Posterior vena cava (tissue), 2 donors: ENCODE measurements at regions of chr11 and their contacts with region 1.

Region 1: DNA sequence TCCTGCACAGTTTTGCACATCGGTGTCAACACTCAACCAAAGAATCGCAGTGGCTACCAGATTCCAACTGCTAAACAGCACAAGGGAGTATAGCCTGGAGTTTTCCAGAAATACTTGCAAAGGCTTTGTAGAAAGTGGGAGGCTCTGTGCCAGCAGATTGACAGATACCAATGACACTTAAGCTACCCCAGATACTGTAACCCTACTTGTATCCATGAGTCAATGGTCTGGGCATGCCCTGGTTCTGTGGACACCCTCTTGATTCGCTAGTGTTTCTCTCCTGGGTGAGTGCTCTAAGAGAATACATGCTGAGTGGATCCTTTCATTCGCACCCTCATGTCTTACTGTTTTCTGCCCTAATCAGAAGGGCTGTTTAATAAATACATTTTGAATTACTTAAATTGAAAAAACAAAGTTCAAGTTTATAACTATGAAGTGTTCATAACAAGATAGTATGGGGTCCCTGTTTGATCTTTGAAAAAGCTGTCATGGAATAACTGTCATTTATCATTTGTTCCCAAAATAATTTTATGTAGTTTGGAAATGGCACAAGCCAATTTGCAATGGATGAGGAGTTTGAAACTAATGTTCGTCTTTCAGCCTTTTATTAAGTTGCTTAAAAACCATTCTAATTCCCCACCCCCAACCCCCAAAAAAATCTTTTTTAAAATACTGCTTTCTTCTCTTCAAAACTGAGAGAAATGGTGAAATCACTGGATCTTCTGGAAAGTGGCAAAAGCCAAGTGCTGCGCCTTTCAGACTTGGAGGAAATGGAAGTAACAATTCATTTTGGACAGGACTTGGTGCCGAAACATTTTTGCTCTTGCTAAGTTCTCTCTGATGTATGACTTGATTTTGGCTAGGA is 600.5 kb upstream of the TENM4 start:
- DNase-seq: no peak

Region 2: GRCh38 chr11:81397316-81397715 is 1355.9 kb after region 1 on chr11:
- intact Hi-C with region 1: loop called in 1 of 2 experiments (anchors 5 kb)
- DNase-seq: no peak